ENCODE measurements at regions of chr2 and their contacts with region 1.

Region 1: GRCh38 chr2:149307014-149307413 is 23.4 kb upstream of the LYPD6 start:
- DNase-seq: no peak
- ATAC-seq: no peak
- H3K4me3 ChIP-seq: no peak overlapping the region
- H3K27ac ChIP-seq: no peak overlapping the region
- H3K4me1 ChIP-seq: no peaks in the 10 kb centered on the region
- H3K27me3 ChIP-seq: peaks cover 0 to 37% (median 0%) of the 10 kb centered on the region in 9 donors
- CTCF ChIP-seq: no peak
- POLR2A ChIP-seq: no peak

Region 2: GRCh38 chr2:148914463-148914862 is 392.6 kb before region 1 on chr2:
- intact Hi-C with region 1: no loop called
- DNase-seq: no peak
- ATAC-seq: no peak
- H3K4me3 ChIP-seq: no peak overlapping the region
- H3K27ac ChIP-seq: no peak overlapping the region
- H3K4me1 ChIP-seq: no peaks in the 10 kb centered on the region
- H3K27me3 ChIP-seq: no peaks in the 10 kb centered on the region
- CTCF ChIP-seq: no peak
- POLR2A ChIP-seq: no peak

Region 3: GRCh38 chr2:149038442-149039212 is 268.4 kb before region 1 on chr2 and contains the start of gene LYPD6B:
- intact Hi-C with region 1: loop called in 1 of 10 experiments (anchors 10 kb)
- DNase-seq: no peak
- ATAC-seq: peak in 2 of 4 donors; percentile 22 to 29
- H3K4me3 ChIP-seq: peak within 1 kb of the TSS in 5 of 12 donors; percentile 20 to 44 (median 21)
- H3K27ac ChIP-seq: no peak within 1 kb of the TSS
- H3K4me1 ChIP-seq: peaks cover 0 to 10% (median 0%) of the 10 kb centered on the region in 12 donors
- H3K27me3 ChIP-seq: peaks cover 10 to 47% (median 31%) of the 10 kb centered on the region in 9 donors
- CTCF ChIP-seq: no peak
- POLR2A ChIP-seq: no peak
- total RNA-seq, gene LYPD6B: not detected